ENCODE measurements at regions of chr9 and their contacts with region 1.

Region 1: GRCh38 chr9:104589626-104590025 is 9.6 kb downstream of the OR13C5 start:
- DNase-seq: no peak
- H3K4me3 ChIP-seq: no peak overlapping the region
- CTCF ChIP-seq: no peak

Region 2: DNA sequence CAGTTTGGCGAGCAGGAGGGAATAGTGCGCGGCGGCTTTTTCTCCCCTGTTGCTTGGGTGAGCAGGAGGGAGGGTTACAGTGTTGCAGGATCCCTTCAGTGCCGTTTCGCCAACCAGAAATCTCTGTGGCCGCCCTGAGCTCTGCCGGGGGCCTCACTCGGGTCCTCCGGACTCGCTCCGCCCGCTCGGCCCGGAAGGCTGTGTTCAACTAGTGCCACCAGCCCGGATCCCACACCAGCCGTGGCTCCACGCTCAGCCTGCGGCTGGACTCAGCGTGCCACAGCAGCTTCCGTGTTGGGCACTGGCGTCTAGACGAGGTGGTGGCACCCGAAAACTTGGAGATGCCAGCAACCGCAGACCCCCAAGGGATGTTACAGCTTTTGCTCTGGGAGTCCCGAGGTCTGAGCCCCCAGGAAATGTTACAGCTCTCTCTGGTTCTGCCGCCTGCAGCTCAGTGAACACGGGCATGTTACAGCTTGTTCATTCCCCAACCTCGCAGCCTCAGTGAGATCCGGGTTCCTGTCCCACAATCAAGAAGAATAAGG is 44.4 kb after region 1 on chr9:
- in situ Hi-C with region 1: loop called (anchors 5 kb)
- DNase-seq: no peak
- H3K4me3 ChIP-seq: no peak overlapping the region
- CTCF ChIP-seq: no peak

Measured in astrocyte of the cerebellum (primary cell).